ENCODE measurements at regions of chr5 and their contacts with region 1.

Region 1: DNA sequence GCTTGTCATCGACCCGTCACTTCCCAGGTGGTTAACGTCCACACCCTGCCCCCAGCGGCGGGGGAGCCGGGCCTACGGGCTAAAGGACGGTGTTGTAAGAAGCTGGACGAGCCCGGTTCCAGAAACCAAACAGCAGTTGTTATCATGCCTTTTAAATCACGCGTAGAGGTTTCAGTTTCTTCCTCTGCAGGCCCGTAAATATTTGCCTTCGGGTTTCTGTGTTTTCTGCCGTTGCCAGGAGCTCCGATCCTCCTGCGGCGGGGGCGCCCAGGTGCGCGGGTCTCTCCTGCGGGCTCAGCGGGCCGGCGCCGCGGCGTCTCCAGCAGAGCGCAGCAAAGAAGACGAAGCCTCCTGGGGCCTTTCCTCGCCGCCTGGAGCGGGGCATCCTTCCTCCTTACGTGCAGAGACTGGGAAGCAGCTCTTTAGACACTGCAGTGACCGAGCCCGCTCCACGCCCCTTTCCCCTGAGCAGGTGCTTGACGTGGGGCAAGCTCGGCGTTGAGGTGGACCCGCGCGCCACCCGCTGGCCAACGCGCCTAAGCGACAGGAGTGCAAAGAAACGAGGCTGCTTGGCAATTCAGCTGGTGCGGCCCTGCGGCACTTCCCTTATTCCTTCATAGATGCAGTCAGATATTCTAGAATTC is 21.8 kb upstream of the TTC1 start:
- DNase-seq: peak; percentile 76 to 86
- ATAC-seq: peak; percentile 96 to 99
- H3K4me3 ChIP-seq: peak overlapping the region; percentile 43
- H3K27ac ChIP-seq: peak overlapping the region in 1 of 2 experiments; percentile 14; a peak in 1 of 6 replicates
- H3K4me1 ChIP-seq: no peaks in the 10 kb centered on the region
- CTCF ChIP-seq: peak; percentile 80
- EP300 ChIP-seq: no peak
- POLR2A ChIP-seq: no peak
- RAD21 ChIP-seq: peak; percentile 95

Region 2: DNA sequence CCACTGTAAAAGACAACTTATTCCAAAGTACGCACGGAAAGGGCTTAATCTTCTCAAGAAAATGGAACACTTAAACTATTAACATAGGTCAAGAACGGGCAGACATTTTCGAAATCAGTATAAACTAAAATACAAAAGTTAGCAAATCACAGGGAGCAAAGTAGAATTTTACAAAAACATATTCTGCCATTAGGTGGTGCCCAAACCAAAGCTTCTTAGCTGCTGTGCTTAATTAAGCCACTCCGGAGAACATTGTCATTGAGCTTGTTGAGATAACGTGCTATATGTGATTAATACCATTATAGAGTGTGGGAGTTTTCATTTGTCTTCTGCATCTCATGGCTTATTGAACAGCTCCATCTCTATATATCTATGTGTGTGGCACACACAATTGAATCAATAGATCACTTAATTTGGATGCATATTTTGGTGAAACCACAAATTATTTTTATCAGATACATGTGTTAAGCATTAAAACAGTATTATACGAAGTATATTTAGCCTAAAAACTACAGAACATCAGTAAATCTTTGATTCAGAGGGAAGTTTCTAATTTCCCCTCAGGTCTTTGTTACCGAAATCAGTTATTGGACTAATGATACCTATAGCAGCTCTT is 700.6 kb before region 1 on chr5:
- CTCF ChIA-PET with region 1: interaction called, 16 read pairs
- POLR2A ChIA-PET with region 1: no interaction called
- DNase-seq: peak in 1 of 2 experiments; percentile 35
- ATAC-seq: peak in 1 of 2 experiments; percentile 57; a peak in 2 of 6 replicates
- H3K4me3 ChIP-seq: no peak overlapping the region
- H3K27ac ChIP-seq: no peak overlapping the region
- H3K4me1 ChIP-seq: no peaks in the 10 kb centered on the region
- CTCF ChIP-seq: peak; percentile 61
- EP300 ChIP-seq: no peak
- POLR2A ChIP-seq: no peak
- RAD21 ChIP-seq: peak; percentile 71 to 72

Region 3: DNA sequence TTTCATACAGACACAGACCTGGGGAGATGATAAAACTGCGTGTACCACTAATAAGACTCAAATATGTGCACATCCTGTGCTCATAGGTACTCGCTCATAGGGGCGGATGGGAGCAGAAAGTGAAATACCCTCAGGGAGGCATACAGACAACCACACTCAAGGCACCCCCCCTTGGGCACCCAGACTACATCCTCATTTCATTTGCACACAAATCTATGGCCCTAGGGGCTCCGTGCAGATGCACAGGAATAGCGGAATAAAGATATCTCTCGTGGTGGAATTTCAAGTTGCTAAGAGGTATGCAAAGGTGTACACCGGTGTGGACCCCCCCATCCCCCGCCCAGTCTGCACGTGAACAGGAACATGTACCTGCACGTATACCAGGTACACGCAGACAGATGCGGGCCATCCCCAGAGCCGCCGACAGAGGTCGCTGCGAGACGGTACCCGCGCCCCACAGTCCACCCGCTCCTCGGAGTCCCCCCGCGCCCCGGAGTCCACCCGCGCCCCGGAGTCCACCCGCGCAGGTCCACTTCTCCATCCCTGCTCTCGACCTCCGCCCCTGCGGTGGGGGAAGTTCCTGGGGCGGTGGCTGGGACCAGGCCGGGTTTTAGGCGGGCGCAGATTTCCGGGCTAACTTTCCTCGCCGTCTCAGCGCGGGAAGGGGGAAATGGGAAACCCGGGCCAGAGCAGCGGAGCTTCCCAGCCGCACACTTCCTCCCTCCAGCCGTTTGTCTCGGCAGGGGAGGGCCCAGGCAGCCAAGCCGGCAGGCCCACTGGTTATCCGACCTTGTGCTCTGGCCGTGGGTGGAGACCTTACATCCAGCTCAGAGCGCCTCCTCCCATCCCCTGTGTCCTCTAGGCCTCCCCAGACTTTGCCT is 655.8 kb before region 1 on chr5:
- CTCF ChIA-PET with region 1: interaction called, 18 read pairs
- POLR2A ChIA-PET with region 1: no interaction called
- DNase-seq: peak; percentile 71 to 76
- ATAC-seq: peak; percentile 95 to 96
- H3K4me3 ChIP-seq: peak overlapping the region; percentile 53
- H3K27ac ChIP-seq: peak overlapping the region; percentile 88 to 96
- H3K4me1 ChIP-seq: peaks cover 21% of the 10 kb centered on the region; the same call in 2 of the 3 replicates
- CTCF ChIP-seq: peak; percentile 74
- EP300 ChIP-seq: no peak
- POLR2A ChIP-seq: no peak
- RAD21 ChIP-seq: peak; percentile 63 to 82

Region 4: DNA sequence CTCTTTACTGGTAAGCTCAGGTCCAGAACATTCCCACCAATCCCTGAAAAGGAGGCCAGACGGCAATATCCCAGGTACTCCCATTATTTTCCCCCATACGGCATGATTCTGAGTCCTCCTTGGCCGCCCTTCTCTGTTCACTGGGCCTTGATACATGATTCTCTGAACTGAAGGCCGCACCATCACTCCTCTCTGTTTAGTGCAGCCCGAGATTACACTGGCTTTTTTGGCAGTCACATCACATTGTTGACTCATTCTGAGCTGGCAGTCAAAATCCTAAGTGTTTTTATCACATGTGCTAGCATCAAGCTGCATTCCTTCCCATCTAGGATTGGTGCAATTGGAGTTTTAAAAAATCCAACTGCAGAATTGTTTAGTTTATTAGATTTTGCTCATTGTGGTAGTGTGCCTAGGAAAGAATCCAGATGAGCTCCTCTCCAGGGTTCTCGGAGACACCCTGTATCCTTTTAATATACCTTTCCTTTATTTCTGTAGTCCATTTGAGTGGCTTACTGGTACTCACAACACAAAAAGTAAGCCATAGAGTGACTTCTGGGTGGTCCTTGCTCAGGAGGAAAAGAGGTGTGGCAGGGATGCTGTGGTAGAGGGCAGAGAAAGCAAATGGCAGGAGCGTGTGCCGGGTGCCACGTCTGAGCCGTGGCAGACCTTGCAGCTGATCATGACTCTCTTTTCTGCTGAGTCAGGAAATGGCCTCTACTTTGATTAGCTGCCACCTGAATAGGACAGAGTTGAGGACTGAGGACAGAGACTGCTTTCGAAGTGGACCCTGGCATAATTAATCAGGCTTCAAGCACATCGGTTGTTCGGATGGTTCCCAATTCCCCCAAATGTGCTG is 535.7 kb before region 1 on chr5:
- CTCF ChIA-PET with region 1: interaction called, 157 read pairs
- POLR2A ChIA-PET with region 1: no interaction called
- DNase-seq: peak; percentile 73 to 75
- ATAC-seq: peak; percentile 78 to 87
- H3K4me3 ChIP-seq: no peak overlapping the region
- H3K27ac ChIP-seq: peak overlapping the region; percentile 57 to 78
- H3K4me1 ChIP-seq: peaks cover 47% of the 10 kb centered on the region
- CTCF ChIP-seq: no peak
- EP300 ChIP-seq: no peak
- POLR2A ChIP-seq: no peak
- RAD21 ChIP-seq: peak; percentile 7 to 34; a peak in 4 of 5 replicates

Region 5: DNA sequence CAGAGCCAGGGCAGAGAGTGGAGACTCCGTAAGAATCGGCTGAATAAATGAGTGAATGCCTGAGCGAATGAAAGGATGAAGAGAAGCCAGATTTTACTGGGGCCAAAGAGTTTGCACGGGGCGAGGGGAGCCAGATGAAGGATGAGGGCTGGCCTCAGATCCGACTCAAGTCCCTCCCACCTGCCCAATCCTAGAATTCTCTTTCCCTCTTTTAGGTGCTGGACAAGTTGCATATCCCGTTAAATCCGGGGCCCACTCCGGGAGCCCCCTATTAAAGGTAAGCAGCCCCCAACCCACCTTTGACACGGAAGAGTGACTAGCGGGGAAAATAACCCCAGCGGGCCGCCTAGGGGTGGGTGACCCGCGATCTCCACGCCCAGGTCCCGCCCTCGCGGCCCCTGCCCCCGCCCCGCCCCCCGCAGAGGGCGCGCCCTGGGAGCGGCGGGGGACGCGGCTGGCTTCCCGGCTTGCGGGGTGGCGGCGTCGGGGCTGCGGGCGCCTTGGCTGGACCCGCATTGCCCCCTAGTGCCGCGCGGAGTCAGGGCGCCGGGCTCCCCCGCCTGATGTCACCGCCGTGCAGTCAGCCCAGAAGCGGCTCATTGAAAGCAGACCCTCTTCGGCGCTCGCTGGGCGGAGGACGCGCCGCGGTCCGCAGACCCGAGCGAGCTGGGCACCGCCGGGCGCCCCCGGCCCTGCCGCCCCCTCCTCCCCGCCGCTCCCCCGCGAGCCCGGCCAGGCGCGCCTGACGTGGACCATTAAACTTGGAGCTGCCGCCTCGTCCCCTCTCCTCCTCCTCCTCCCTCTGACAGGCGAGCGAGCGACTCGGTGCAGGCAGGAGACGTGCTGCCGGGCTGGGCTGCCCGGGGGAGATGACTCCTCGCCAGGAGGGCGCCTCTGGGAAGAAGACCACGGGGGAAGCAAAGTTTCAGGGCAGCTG is 71.0 kb before region 1 on chr5 and contains the start of gene ADRA1B:
- CTCF ChIA-PET with region 1: interaction called, 51 read pairs
- POLR2A ChIA-PET with region 1: no interaction called
- DNase-seq: peak; percentile 76 to 86
- ATAC-seq: peak; percentile 70 to 73
- H3K4me3 ChIP-seq: peak within 1 kb of the TSS; percentile 63
- H3K27ac ChIP-seq: peak within 1 kb of the TSS; percentile 89 to 96
- H3K4me1 ChIP-seq: peaks cover 84% of the 10 kb centered on the region
- CTCF ChIP-seq: peak; percentile 84
- EP300 ChIP-seq: peak; percentile 18 to 21; a peak in 1 of 5 replicates
- POLR2A ChIP-seq: no peak
- RAD21 ChIP-seq: peak; percentile 79 to 99
- polyA plus RNA-seq, gene ADRA1B: 4.4 and 5.1 TPM in 2 replicates

Region 6: DNA sequence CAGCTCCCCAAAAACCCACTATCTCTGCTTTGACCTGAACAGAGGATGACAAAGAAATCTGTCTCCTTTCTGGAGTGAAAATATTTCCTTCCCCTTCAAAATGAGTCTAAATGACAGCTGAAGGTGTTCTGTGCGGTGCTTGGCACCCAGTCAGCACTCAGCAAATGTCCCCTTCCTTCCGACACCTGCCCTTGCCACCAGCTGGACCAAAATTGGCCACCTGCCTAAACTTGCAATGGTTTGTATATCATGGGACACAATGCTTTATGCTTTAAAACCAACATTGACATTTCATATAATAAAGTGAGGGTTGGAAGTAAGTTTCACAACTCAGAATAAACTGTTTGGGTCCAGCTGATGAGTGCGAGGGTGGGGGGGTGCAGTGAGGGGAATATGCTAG is 14.3 kb after region 1 on chr5:
- CTCF ChIA-PET with region 1: interaction called, 13 read pairs
- POLR2A ChIA-PET with region 1: no interaction called
- DNase-seq: no peak
- ATAC-seq: no peak
- H3K4me3 ChIP-seq: no peak overlapping the region
- H3K27ac ChIP-seq: no peak overlapping the region
- H3K4me1 ChIP-seq: no peaks in the 10 kb centered on the region
- CTCF ChIP-seq: no peak
- EP300 ChIP-seq: no peak
- POLR2A ChIP-seq: no peak
- RAD21 ChIP-seq: no peak

Region 7: DNA sequence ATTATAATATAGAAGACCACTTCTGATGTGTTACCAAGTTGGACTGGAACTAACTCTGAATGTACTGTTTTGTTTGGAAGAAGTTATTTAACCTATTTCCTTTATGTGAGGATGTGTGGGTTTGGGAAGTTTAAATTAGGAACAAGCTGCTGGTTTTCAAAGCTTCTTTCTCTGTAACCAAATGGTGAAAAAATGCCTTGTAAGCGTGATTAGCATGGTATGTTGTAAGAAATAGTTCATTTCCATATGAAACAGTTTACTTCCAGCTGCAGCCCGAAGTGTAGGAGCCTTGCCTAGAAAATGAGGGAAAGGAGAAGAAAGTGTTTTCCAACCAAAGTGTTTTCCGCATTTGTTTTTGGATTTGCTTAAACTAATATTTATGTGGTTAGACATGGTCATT is 57.8 kb after region 1 on chr5:
- CTCF ChIA-PET with region 1: no interaction called
- POLR2A ChIA-PET with region 1: no interaction called
- DNase-seq: no peak
- ATAC-seq: no peak
- H3K4me3 ChIP-seq: no peak overlapping the region
- H3K27ac ChIP-seq: no peak overlapping the region
- H3K4me1 ChIP-seq: peaks cover 1% of the 10 kb centered on the region; the same call in 1 of the 3 replicates
- CTCF ChIP-seq: no peak
- EP300 ChIP-seq: no peak
- POLR2A ChIP-seq: no peak
- RAD21 ChIP-seq: no peak

Measured in A549 (cell line).